Left cardiac atrium (tissue), 4 donors: ENCODE measurements at regions of chr4 and their contacts with region 1.

Region 1: GRCh38 chr4:17614416-17615299 is at the start of gene MED28:
- DNase-seq: peak; percentile 98
- ATAC-seq: peak; percentile 98 to 99
- total RNA-seq, gene MED28: 25.8 to 28.9 TPM

Region 2: GRCh38 chr4:17447056-17447455 is 167.6 kb before region 1 on chr4:
- intact Hi-C with region 1: no loop called
- DNase-seq: no peak
- ATAC-seq: peak in 1 of 2 donors; percentile 25

Region 3: GRCh38 chr4:17576932-17577665 is 37.6 kb before region 1 on chr4 and contains the start of gene LAP3:
- intact Hi-C with region 1: loop called in 1 of 2 experiments (anchors 5 kb)
- DNase-seq: peak; percentile 97
- ATAC-seq: peak; percentile 99
- total RNA-seq, gene LAP3: 60.6 to 76.8 TPM

Region 4: DNA sequence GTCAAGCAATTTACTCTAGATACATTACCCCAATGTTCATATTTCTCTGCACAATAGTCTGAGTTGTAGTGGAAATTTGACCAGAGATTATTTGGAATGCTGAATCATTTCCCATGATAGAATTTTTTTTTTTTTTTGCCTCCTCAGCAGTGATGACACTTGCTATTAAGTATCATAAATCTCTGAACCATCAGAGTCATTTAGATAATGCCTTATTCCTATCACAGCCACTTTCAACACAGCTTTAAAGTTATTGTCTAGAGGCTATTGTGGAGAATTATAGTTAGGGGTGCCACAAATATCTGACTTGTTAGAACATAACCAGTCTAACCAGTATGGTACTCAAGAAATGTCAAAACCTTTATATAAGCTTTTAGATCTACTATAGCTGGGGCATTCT is 327.1 kb after region 1 on chr4:
- intact Hi-C with region 1: no loop called
- DNase-seq: no peak
- ATAC-seq: no peak